Activated CD4-positive, alpha-beta memory T cell treated with anti-CD3 and anti-CD28 coated beads for 36 hours (primary cell): ENCODE measurements at regions of chr17 and their contacts with region 1.

Region 1: DNA sequence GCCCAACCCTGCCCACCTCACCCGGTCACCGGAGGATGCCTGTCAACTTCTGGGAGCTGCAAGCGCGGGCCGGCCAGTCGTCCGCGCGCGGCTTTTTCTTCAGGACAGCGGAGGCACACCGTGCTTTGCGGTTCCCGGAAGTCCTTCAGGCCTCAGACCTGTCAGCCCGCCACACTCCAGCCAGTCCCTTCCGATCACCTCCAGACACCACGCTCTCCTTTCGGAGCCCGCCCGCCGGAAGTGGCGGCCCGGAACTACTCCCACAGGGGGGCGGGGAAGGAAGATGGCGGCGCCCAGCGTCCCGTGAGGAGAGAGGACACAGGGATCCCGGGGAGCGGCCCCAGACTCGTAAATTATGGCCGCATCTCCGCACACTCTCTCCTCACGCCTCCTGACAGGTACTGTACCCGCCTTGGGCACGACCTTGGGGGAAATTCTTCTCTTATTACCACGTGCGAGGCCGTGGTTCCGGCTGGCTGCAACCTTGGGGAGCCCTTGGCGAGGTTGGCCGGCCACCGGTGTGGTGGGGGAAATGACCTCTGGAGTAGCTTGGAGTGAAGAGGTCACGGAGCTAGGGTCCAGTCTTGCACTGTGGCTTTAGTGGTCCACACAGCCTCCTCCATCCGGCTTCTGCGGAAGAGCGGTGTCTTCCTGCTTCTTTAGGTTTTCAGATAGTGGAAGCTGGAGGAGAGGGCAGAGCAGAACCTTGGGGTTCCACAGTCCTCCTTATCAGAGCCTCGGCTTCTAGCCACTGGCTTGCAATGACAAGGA is at the start of gene COX10:
- DNase-seq: peak; percentile 90
- H3K4me3 Mint-ChIP-seq: peak within 1 kb of the TSS; percentile 98
- H3K27ac Mint-ChIP-seq: peak within 1 kb of the TSS; percentile 89
- H3K4me1 Mint-ChIP-seq: peaks cover 58% of the 10 kb centered on the region
- H3K27me3 Mint-ChIP-seq: no peaks in the 10 kb centered on the region
- total RNA-seq, gene COX10: 22.9 to 23.6 TPM

Region 2: GRCh38 chr17:14143688-14144087 is 74.3 kb after region 1 on chr17:
- CTCF ChIA-PET with region 1: no interaction called
- POLR2A ChIA-PET with region 1: no interaction called
- intact Hi-C with region 1: no loop called
- DNase-seq: no peak
- H3K4me3 Mint-ChIP-seq: no peak overlapping the region
- H3K27ac Mint-ChIP-seq: no peak overlapping the region
- H3K4me1 Mint-ChIP-seq: peaks cover 26% of the 10 kb centered on the region
- H3K27me3 Mint-ChIP-seq: no peaks in the 10 kb centered on the region

Region 3: DNA sequence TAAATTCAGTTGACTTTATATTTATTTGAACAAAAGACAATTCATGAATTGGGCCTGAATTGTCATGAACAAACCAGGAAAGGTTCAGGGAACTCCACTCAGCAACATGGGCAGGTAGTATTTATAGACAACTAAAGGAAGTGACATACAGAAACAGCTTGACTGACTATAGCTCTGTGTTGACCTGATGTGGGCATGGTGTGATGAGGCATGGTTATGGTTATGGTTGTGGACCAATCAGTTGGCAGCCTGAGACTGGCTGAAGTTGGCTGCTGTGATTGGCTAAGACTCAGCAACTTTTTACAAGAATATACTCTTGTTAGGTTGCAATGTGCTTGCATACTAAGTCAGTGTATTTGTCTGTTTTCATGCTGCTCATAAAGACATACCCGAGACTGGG is 339.9 kb after region 1 on chr17:
- CTCF ChIA-PET with region 1: no interaction called
- POLR2A ChIA-PET with region 1: no interaction called
- intact Hi-C with region 1: loop called (anchors 10 kb)
- DNase-seq: no peak
- H3K4me3 Mint-ChIP-seq: no peak overlapping the region
- H3K27ac Mint-ChIP-seq: no peak overlapping the region
- H3K4me1 Mint-ChIP-seq: peaks cover 15% of the 10 kb centered on the region
- H3K27me3 Mint-ChIP-seq: no peaks in the 10 kb centered on the region